ENCODE measurements at regions of chr2 and their contacts with region 1.

Region 1: DNA sequence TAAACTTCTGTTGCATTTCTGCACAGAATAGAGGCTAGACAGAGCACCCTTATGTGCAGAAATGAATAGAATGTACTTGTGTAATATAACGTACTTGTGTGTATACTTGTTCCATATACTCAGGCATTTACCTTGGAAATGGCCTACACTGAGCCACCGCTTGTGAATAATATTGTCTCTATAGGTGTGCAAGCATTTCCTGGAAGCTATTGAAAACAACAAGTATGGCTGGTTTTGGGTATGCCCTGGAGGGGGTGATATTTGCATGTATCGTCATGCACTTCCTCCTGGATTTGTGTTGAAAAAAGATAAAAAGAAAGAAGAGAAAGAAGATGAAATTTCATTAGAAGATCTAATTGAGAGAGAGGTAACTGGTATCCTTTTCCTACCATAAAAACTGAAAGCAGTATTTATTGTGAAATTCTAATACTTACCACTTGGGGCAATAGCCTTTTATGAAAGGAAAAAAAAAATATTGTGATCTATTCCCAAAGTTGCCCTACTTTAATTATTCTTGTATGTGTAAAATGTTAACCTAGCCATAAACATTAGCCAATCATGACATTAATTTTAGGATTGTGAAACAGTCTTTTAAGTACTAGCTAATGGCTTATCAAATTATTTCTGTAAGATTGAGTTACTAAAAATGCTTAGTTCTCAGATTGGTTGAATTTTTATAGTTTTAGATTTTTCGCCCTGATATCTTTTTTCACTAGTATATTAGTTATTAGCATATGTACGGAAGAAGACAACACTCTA is 18.0 kb downstream of the ZC3H15 start:
- DNase-seq: no peak
- H3K4me3 ChIP-seq: no peak overlapping the region
- H3K27ac ChIP-seq: no peak overlapping the region
- H3K4me1 ChIP-seq: no peaks in the 10 kb centered on the region
- H3K27me3 ChIP-seq: no peaks in the 10 kb centered on the region
- CTCF ChIP-seq: peak in 2 of 3 experiments; percentile 22 to 28

Region 2: GRCh38 chr2:186641807-186642321 is 137.8 kb after region 1 on chr2:
- dilution Hi-C with region 1: loop called (anchors 25 kb)
- DNase-seq: peak; percentile 55
- H3K4me3 ChIP-seq: no peak overlapping the region
- H3K27ac ChIP-seq: peak overlapping the region; percentile 40
- H3K4me1 ChIP-seq: peaks cover 4% of the 10 kb centered on the region
- H3K27me3 ChIP-seq: no peaks in the 10 kb centered on the region
- CTCF ChIP-seq: peak; percentile 66 to 79 (median 71)

Measured in keratinocyte (primary cell).